Heart left ventricle (tissue), 16 donors: ENCODE measurements at regions of chr4 and their contacts with region 1.

Region 1: DNA sequence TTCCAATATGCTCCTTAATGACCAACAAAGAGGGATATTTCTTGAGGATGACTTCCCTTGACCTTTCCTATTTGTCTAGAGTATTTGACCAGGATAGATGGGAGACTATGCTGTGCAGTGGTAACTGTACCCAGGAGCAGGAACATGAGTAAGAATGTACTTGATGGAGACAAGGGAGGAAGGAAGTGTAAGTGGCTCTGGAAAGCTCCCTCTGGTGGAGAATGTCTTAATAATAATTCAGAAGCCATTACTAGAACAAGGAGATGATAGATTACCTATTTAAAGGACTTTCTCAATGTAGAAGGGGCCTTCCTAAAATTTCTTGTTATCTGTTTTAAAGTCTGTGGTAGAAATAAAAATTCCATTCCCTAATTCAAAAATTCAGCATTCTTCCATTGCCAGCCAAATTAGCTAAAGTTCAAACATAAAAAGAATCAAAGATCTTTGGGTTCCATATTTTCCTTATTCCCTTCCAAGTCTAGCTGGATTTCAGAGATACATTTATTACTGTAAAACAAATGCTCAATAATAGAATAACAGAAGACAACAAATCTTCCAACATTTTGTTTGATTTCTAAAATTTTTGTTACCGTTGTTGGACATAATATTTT is 83.8 kb downstream of the GRID2 start:
- DNase-seq: no peak
- ATAC-seq: peak in 3 of 4 donors; percentile 39 to 60 (median 56)
- H3K4me3 ChIP-seq: no peak overlapping the region
- H3K27ac ChIP-seq: no peak overlapping the region
- H3K4me1 ChIP-seq: no peaks in the 10 kb centered on the region
- H3K27me3 ChIP-seq: no peaks in the 10 kb centered on the region
- CTCF ChIP-seq: peak in 11 of 12 donors; percentile 35 to 62 (median 48)
- POLR2A ChIP-seq: no peak

Region 2: GRCh38 chr4:90419124-90419711 is 1968.3 kb before region 1 on chr4:
- intact Hi-C with region 1: loop called in 1 of 10 experiments (anchors 5 kb)
- DNase-seq: no peak
- ATAC-seq: peak in 1 of 4 donors; percentile 59
- H3K4me3 ChIP-seq: no peak overlapping the region
- H3K27ac ChIP-seq: no peak overlapping the region
- H3K4me1 ChIP-seq: no peaks in the 10 kb centered on the region
- H3K27me3 ChIP-seq: no peaks in the 10 kb centered on the region
- CTCF ChIP-seq: peak in 10 of 12 donors; percentile 26 to 63 (median 48)
- POLR2A ChIP-seq: no peak

Region 3: GRCh38 chr4:91113130-91113706 is 1274.3 kb before region 1 on chr4:
- intact Hi-C with region 1: loop called in 4 of 10 experiments (anchors 5 to 10 kb)
- DNase-seq: no peak
- ATAC-seq: no peak
- H3K4me3 ChIP-seq: no peak overlapping the region
- H3K27ac ChIP-seq: no peak overlapping the region
- H3K4me1 ChIP-seq: peaks cover 0 to 4% (median 0%) of the 10 kb centered on the region in 12 donors
- H3K27me3 ChIP-seq: no peaks in the 10 kb centered on the region
- CTCF ChIP-seq: peak in 11 of 12 donors; percentile 23 to 63 (median 46)
- POLR2A ChIP-seq: no peak

Region 4: DNA sequence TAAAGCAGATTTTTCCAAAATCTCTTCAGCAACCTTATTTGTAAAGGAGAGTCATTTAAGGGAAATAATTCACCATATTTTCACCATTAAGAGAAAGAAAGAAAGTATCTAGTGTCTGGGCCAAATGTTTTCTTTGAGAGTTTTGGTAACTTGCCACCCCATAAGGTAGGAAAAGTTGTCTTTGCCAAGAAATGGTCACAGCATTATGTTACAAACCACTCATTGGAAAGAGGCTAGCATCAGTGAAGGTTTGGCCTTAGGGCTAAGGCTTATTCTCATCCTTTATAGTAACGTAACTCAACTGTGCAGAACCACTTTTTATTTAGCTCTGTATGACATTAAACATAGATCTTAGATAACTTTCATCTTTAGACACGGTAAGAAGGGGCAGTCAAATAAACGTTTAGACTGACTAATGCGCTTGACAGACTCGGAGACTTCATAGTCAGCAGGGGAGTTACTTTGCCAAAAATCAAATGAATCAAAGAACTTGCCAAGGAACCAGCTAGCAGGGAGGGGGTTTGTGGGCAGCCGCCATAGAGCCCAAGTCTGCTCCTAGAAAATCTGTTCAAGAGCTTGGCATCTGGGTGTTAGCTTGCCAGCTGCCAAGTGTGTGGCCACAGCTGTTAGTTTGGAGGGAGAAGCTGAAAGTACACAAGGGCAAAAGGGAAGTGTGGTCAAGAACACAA is 266.6 kb before region 1 on chr4:
- intact Hi-C with region 1: no loop called
- DNase-seq: peak in 1 of 5 donors; percentile 31
- ATAC-seq: peak in 1 of 4 donors; percentile 52
- H3K4me3 ChIP-seq: no peak overlapping the region
- H3K27ac ChIP-seq: no peak overlapping the region
- H3K4me1 ChIP-seq: no peaks in the 10 kb centered on the region
- H3K27me3 ChIP-seq: no peaks in the 10 kb centered on the region
- CTCF ChIP-seq: no peak
- POLR2A ChIP-seq: no peak

Region 5: DNA sequence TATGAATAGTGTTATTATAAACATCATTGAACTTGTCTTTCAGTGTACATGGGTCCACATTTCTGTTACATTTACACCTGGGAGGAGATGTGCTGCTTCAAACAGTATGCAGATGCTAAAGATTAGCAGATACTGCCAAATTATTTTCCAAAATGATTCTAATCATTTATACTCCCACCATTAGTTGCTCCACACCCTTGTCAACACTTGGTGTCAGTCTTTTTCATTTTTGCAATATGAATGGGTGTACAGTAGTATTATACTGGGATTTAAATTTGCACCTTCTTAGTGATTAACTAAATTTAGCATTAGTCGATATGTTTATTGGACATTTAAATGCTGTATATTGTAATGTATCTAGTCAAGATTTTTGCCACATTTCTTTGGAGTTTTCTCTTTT is 215.4 kb before region 1 on chr4:
- intact Hi-C with region 1: loop called in 1 of 10 experiments (anchors 5 kb)
- DNase-seq: no peak
- ATAC-seq: no peak
- H3K4me3 ChIP-seq: no peak overlapping the region
- H3K27ac ChIP-seq: no peak overlapping the region
- H3K4me1 ChIP-seq: no peaks in the 10 kb centered on the region
- H3K27me3 ChIP-seq: no peaks in the 10 kb centered on the region
- CTCF ChIP-seq: no peak
- POLR2A ChIP-seq: no peak

Region 6: DNA sequence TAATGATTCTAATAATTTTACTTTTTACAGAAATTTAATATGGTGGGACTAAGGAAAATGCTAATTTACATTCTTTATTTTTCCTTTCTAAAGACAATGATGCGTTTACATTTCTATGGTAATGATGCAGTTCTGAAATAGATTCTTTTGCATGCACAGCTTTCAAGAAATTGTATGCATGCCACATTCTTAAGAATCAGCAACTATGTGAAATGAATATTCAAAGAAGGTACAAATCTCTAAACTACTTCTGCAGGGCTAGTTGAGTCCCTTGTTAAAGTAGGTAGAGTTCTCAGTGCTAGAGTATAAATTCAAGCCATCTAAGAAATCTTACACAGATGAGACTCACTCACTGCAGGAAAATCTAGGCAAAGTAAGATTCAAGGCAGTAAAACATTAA is 108.3 kb before region 1 on chr4:
- intact Hi-C with region 1: no loop called
- DNase-seq: no peak
- ATAC-seq: no peak
- H3K4me3 ChIP-seq: no peak overlapping the region
- H3K27ac ChIP-seq: no peak overlapping the region
- H3K4me1 ChIP-seq: no peaks in the 10 kb centered on the region
- H3K27me3 ChIP-seq: no peaks in the 10 kb centered on the region
- CTCF ChIP-seq: no peak
- POLR2A ChIP-seq: no peak

Region 7: GRCh38 chr4:92305148-92305877 is 82.3 kb before region 1 on chr4:
- intact Hi-C with region 1: loop called in 1 of 10 experiments (anchors 10 kb)
- DNase-seq: peak; percentile 22 to 69 (median 39)
- ATAC-seq: peak; percentile 37 to 84 (median 74)
- H3K4me3 ChIP-seq: peak overlapping the region; percentile 23 to 55 (median 43)
- H3K27ac ChIP-seq: no peak overlapping the region
- H3K4me1 ChIP-seq: peaks cover 0 to 29% (median 3%) of the 10 kb centered on the region in 12 donors
- H3K27me3 ChIP-seq: peaks cover 2 to 67% (median 39%) of the 10 kb centered on the region in 9 donors
- CTCF ChIP-seq: no peak
- POLR2A ChIP-seq: no peak

Region 8: DNA sequence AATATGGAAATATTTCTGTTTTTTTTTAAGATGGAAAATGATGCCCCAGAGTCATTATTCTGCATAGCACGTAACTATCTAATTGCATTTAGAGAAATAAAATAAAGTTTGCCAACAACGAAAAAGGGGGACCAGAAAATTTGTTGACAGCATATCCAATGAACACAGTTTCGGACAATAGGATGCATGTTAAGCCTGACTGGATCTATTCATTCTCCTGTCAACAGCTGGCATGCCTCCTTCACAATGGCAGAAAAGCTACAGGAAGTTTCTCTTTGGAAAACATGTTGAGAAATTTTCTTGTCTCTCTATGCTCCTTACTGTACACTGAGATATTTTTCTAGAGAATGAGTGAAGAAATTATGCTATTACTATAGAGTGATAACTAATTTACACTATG is 178.7 kb after region 1 on chr4:
- intact Hi-C with region 1: no loop called
- DNase-seq: no peak
- ATAC-seq: no peak
- H3K4me3 ChIP-seq: no peak overlapping the region
- H3K27ac ChIP-seq: no peak overlapping the region
- H3K4me1 ChIP-seq: no peaks in the 10 kb centered on the region
- H3K27me3 ChIP-seq: no peaks in the 10 kb centered on the region
- CTCF ChIP-seq: no peak
- POLR2A ChIP-seq: no peak